Sciatic nerve (tissue), 2 donors: ENCODE measurements at regions of chr4 and their contacts with region 1.

Region 1: GRCh38 chr4:11805842-11806241 is 377.1 kb upstream of the HS3ST1 start:
- DNase-seq: no peak
- ATAC-seq: peak; percentile 74

Region 2: GRCh38 chr4:11765849-11766453 is 39.9 kb before region 1 on chr4:
- intact Hi-C with region 1: no loop called
- DNase-seq: no peak
- ATAC-seq: no peak

Region 3: GRCh38 chr4:11904117-11904535 is 98.3 kb after region 1 on chr4:
- intact Hi-C with region 1: no loop called
- DNase-seq: no peak
- ATAC-seq: peak; percentile 63

Region 4: DNA sequence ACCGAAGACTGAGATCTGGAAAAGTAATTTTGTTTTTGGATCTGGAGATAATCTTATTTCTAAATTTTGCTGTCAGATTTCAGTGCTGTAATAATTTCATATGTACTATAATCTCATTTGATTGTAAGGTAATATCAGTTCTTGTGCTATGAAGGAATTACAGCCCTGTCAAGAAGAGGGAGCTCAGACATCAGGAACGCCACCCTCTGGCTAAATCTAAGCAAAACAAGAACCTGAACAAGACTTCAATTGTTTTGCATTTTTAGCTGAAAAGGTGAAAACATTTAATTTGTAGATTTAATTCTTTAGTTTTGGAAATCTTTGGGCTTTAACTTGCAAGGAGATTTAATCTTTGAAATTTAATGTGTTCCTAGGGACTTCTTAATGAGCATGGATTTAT is 148.3 kb after region 1 on chr4:
- intact Hi-C with region 1: loop called (anchors 10 kb)
- DNase-seq: no peak
- ATAC-seq: no peak